Naive thymus-derived CD8-positive, alpha-beta T cell (primary cell): ENCODE measurements at regions of chr4 and their contacts with region 1.

Region 1: DNA sequence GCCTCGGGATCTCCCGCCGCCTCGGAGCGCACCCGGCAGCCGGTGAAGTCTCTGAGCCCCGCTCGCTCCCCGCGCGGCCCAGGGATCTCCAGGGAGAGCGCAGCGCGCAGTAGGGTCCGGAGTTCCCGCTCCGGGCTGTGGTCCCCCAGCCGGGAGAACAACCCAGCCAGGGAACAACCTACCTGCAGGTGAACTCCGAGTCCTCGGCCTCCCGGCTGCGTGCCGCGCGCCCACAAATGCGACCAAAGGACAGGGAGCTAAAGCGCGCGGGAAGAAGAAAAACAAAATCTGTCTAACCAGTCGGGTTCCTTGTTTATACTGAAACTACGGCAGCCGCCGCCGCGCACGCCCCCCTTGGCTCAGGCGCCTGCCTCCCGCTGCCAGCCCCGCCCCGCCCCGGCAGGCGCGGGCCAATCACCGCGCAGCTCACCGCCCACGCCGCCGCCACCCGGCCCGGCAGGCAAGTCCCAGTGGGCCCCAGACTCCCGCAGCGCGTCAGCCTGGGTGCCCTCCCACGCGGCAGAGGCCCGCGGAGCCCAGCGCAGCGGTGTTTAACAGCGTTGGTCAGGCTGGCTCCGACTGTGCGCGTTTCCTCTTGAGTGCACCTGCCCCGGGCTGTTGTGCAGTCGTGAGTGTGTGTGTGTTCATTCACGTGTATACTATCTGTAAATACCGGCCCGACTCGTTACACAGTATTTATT is at the start of gene RASGEF1B:
- DNase-seq: peak; percentile 89 to 99 (median 96)
- ATAC-seq: peak; percentile 83 to 86
- H3K4me3 Mint-ChIP-seq: peak within 1 kb of the TSS; percentile 88 to 97 (median 95)
- H3K27ac Mint-ChIP-seq: peak within 1 kb of the TSS; percentile 89 to 100 (median 98)
- H3K4me1 Mint-ChIP-seq: peaks cover 34 to 58% (median 43%) of the 10 kb centered on the region in 4 donors
- H3K27me3 Mint-ChIP-seq: no peaks in the 10 kb centered on the region
- polyA plus RNA-seq, gene RASGEF1B: 6.4 to 13.7 (median 8.9) TPM

Region 2: DNA sequence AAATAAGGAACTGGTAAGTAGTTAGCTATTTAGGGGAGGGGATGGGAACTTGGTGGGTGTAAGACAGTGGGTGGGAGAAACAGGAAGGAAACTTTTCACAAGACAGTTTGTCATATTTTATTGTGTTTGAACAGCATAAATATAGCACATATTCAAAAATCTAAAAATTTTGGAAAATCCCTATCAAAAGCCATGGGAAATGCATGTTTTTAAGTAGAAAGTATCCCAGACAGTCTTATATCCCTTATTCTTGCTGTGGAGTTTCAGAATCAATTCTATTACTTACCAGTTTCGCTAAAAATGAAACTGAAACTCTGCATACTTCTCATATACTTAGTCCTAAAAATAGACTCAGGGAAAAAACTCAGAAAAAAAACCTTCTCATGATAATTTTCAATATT is 22.3 kb after region 1 on chr4:
- POLR2A ChIA-PET with region 1: interaction called, 59 read pairs
- DNase-seq: peak in 3 of 10 donors; percentile 31 to 48 (median 45)
- ATAC-seq: peak in 1 of 2 donors; percentile 33
- H3K4me3 Mint-ChIP-seq: peak overlapping the region; percentile 68 to 84 (median 78)
- H3K27ac Mint-ChIP-seq: peak overlapping the region; percentile 83 to 95 (median 92)
- H3K4me1 Mint-ChIP-seq: peaks cover 20 to 58% (median 53%) of the 10 kb centered on the region in 4 donors
- H3K27me3 Mint-ChIP-seq: no peaks in the 10 kb centered on the region

Region 3: DNA sequence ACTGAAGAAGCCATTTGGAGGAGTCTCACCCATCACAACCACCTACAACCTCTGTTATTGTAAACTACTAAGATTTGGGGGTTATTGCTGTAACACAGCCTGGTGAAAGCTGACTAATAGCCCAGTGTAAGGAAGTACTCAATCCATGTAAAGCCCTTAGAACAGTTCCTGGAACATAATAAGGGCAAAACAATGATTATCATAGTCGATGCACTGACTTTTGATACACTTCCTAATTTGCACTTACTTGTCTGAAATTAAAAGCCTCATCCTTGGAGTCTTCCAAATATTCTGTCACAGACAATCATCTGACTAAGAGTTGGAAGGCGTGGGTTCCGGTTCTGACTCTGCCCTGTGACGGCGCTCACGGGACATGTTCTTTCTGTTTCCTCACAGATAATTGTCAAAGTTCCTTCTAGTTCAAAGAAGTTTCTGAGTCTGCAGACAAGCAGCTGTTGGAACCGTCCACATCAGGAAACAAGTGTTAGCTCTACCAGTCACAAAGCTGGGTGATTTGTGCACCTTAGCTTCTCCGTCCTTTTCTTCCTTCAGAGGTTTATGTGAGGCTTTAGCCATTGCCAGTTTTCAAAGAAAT is 33.4 kb after region 1 on chr4:
- POLR2A ChIA-PET with region 1: interaction called, 18 read pairs
- DNase-seq: peak; percentile 32 to 81 (median 56)
- ATAC-seq: peak; percentile 89 to 92
- H3K4me3 Mint-ChIP-seq: peak overlapping the region; percentile 49 to 79 (median 70)
- H3K27ac Mint-ChIP-seq: peak overlapping the region; percentile 83 to 96 (median 92)
- H3K4me1 Mint-ChIP-seq: peaks cover 16 to 65% (median 53%) of the 10 kb centered on the region in 4 donors
- H3K27me3 Mint-ChIP-seq: no peaks in the 10 kb centered on the region